Activated CD4-positive, alpha-beta memory T cell treated with anti-CD3 and anti-CD28 coated beads for 36 hours (primary cell): ENCODE measurements at regions of chr9 and their contacts with region 1.

Region 1: DNA sequence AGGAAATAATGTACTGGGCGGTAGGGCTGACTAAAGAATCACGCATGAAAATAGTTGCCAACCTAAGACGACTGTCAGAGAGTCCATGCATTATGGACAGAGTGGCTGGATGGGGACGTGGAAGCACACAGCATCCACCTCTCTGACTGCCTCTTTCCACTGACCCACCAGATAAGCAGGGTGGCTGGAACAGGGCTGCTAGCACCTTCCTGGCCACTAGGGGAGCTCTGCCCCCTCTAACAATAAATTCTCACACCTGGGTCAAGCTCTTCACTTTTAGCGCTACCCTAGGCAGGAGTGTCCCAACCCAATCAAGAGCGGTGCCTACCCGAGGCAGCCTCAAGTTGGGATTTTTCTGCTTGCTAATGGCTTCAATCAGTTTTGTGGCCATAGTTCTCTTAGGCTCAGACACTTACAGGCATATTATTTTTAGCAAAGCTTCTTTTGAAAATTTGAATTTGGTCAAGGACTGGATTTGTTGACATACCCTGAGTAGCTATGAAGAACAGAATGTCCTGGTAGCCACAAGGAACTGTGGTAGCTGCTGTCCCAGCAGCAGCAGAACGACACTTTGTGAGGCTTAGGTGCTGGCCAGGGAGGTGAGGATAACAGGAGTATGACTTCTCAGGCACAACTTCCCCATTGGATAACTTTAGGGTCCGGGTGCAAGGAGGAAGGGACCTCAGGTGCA is 6.9 kb upstream of the TPM2 start:
- DNase-seq: peak; percentile 71
- H3K4me3 Mint-ChIP-seq: no peak overlapping the region
- H3K27ac Mint-ChIP-seq: no peak overlapping the region
- H3K4me1 Mint-ChIP-seq: peaks cover 2% of the 10 kb centered on the region
- H3K27me3 Mint-ChIP-seq: no peaks in the 10 kb centered on the region

Region 2: GRCh38 chr9:34884732-34885131 is 811.9 kb before region 1 on chr9:
- CTCF ChIA-PET with region 1: no interaction called
- POLR2A ChIA-PET with region 1: no interaction called
- intact Hi-C with region 1: no loop called
- DNase-seq: peak; percentile 66
- H3K4me3 Mint-ChIP-seq: no peak overlapping the region
- H3K27ac Mint-ChIP-seq: no peak overlapping the region
- H3K4me1 Mint-ChIP-seq: no peaks in the 10 kb centered on the region
- H3K27me3 Mint-ChIP-seq: no peaks in the 10 kb centered on the region

Region 3: GRCh38 chr9:35616681-35617459 is 79.8 kb before region 1 on chr9:
- CTCF ChIA-PET with region 1: interaction called, 30 read pairs
- POLR2A ChIA-PET with region 1: no interaction called
- intact Hi-C with region 1: no loop called
- DNase-seq: peak; percentile 80
- H3K4me3 Mint-ChIP-seq: peak overlapping the region; percentile 77
- H3K27ac Mint-ChIP-seq: peak overlapping the region; percentile 79
- H3K4me1 Mint-ChIP-seq: peaks cover 37% of the 10 kb centered on the region
- H3K27me3 Mint-ChIP-seq: no peaks in the 10 kb centered on the region

Region 4: GRCh38 chr9:35657546-35658136 is 39.0 kb before region 1 on chr9 and contains the start of gene RMRP:
- CTCF ChIA-PET with region 1: interaction called, 28 read pairs
- POLR2A ChIA-PET with region 1: interaction called, 3 read pairs
- intact Hi-C with region 1: loop called (anchors 5 kb)
- DNase-seq: peak; percentile 96
- H3K4me3 Mint-ChIP-seq: peak within 1 kb of the TSS; percentile 86
- H3K27ac Mint-ChIP-seq: peak within 1 kb of the TSS; percentile 96
- H3K4me1 Mint-ChIP-seq: peaks cover 64% of the 10 kb centered on the region
- H3K27me3 Mint-ChIP-seq: peaks cover 2% of the 10 kb centered on the region
- total RNA-seq, gene RMRP: 10,694 to 13,592 TPM

Region 5: GRCh38 chr9:35675732-35676392 is 20.8 kb before region 1 on chr9:
- CTCF ChIA-PET with region 1: interaction called, 14 read pairs
- POLR2A ChIA-PET with region 1: no interaction called
- intact Hi-C with region 1: no loop called
- DNase-seq: peak; percentile 59
- H3K4me3 Mint-ChIP-seq: peak overlapping the region; percentile 48
- H3K27ac Mint-ChIP-seq: no peak overlapping the region
- H3K4me1 Mint-ChIP-seq: peaks cover 4% of the 10 kb centered on the region
- H3K27me3 Mint-ChIP-seq: peaks cover 9% of the 10 kb centered on the region

Region 6: GRCh38 chr9:35723908-35724420 is 27.3 kb after region 1 on chr9:
- CTCF ChIA-PET with region 1: interaction called, 82 read pairs
- POLR2A ChIA-PET with region 1: interaction called, 5 read pairs
- intact Hi-C with region 1: no loop called
- DNase-seq: no peak
- H3K4me3 Mint-ChIP-seq: no peak overlapping the region
- H3K27ac Mint-ChIP-seq: no peak overlapping the region
- H3K4me1 Mint-ChIP-seq: no peaks in the 10 kb centered on the region
- H3K27me3 Mint-ChIP-seq: no peaks in the 10 kb centered on the region